CD4-positive, alpha-beta memory T cell (primary cell): ENCODE measurements at regions of chr15 and their contacts with region 1.

Region 1: DNA sequence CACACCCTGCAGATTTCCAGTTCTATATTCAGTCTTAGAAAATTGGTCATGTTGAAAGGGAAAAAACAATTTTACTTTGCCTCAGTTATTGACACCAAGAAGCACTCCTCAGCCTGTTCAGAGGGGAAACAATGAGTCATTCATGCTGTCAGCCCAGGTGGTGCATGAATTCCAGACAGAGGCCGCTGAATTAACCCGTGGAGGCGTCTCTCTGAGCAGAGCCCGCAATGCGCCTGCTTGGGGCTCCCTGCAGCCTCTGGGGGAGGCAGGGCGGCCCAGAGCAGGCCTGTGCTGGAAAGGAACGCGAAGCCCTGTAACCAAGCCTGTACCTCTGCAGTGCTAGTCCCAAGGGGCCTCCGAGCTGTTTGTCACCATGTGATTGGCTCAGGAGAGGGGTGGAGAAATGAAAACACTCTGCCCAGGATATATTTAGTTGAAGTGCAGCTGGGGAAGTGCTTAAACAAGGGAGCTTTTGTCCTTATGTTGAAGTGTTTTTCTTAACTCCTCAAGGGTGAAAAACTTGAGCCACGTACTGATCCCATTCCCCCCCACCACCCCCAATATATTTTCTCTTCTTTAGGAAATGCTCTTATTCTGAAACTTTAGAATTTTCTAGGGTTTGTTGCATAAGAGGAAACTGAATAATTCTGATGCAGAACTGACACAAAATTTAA is 68.3 kb upstream of the CHD2 start:
- DNase-seq: peak; percentile 80 to 98 (median 89)
- H3K4me3 ChIP-seq: peak overlapping the region; percentile 27 to 34
- H3K4me3 Mint-ChIP-seq: peak overlapping the region; percentile 69 to 91 (median 80)
- H3K27ac ChIP-seq: peak overlapping the region; percentile 66
- H3K27ac Mint-ChIP-seq: peak overlapping the region; percentile 93 to 99 (median 95)
- H3K4me1 ChIP-seq: peaks cover 47% of the 10 kb centered on the region
- H3K4me1 Mint-ChIP-seq: peaks cover 29 to 44% (median 38%) of the 10 kb centered on the region in 4 donors
- H3K27me3 ChIP-seq: no peaks in the 10 kb centered on the region
- H3K27me3 Mint-ChIP-seq: peaks cover 0 to 1% of the 10 kb centered on the region in 2 donors

Region 2: DNA sequence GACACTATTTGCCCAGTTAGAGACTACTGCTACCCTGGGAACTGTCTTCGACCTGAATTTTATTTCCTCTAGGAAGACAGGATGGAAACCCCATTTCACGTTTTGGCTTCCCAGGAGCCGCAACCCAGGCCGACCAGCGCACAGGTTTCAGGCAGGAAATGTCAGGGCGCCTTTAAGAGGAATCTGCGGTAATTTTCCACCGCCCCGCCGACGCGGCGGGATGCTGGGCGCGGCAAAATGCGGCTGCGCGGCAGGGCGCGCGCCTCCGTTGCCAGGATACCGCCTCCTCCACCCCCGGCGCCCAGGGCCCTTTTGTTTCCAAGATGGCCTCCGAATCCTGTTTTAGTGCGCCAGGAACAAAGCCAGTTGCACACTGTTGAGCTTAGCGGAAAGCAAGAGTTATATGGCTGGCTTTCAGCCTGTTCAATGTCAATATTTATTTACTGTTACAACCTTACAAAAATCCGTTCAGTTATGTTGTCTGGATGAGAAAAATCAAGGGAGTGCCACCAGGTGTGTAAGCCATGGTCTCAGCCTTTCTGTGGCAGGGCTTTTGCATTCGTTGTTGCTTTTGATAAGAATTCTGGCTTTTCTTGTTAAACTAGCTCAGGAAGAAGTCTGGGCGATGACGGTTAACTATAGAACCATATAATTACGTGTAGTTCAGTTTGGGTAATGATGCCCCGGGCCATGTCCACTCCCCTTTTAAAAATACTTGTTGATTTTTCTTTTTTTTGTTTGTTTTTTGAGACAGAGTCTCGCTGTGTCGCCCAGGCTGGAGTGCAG is 11.4 kb before region 1 on chr15:
- CTCF ChIA-PET with region 1: interaction called, 57 read pairs
- POLR2A ChIA-PET with region 1: interaction called, 245 read pairs
- intact Hi-C with region 1: loop called (anchors 1 kb)
- DNase-seq: peak; percentile 87 to 89 (median 88)
- H3K4me3 ChIP-seq: peak overlapping the region; percentile 79 to 86
- H3K4me3 Mint-ChIP-seq: peak overlapping the region; percentile 74 to 93 (median 91)
- H3K27ac ChIP-seq: peak overlapping the region; percentile 74
- H3K27ac Mint-ChIP-seq: peak overlapping the region; percentile 97 to 99 (median 99)
- H3K4me1 ChIP-seq: peaks cover 67% of the 10 kb centered on the region
- H3K4me1 Mint-ChIP-seq: peaks cover 40 to 65% (median 54%) of the 10 kb centered on the region in 4 donors
- H3K27me3 ChIP-seq: no peaks in the 10 kb centered on the region
- H3K27me3 Mint-ChIP-seq: no peaks in the 10 kb centered on the region

Region 3: GRCh38 chr15:92845126-92845508 is 13.3 kb after region 1 on chr15:
- CTCF ChIA-PET with region 1: interaction called, 11 read pairs
- POLR2A ChIA-PET with region 1: interaction called, 138 read pairs
- intact Hi-C with region 1: loop called (anchors 1 kb)
- DNase-seq: peak in 4 of 5 donors; percentile 57 to 71 (median 66)
- H3K4me3 ChIP-seq: peak overlapping the region; percentile 21 to 25
- H3K4me3 Mint-ChIP-seq: peak overlapping the region; percentile 73 to 94 (median 86)
- H3K27ac ChIP-seq: peak overlapping the region; percentile 44
- H3K27ac Mint-ChIP-seq: peak overlapping the region; percentile 73 to 99 (median 98)
- H3K4me1 ChIP-seq: peaks cover 80% of the 10 kb centered on the region
- H3K4me1 Mint-ChIP-seq: peaks cover 36 to 86% (median 67%) of the 10 kb centered on the region in 4 donors
- H3K27me3 ChIP-seq: no peaks in the 10 kb centered on the region
- H3K27me3 Mint-ChIP-seq: no peaks in the 10 kb centered on the region

Region 4: GRCh38 chr15:92896561-92896960 is 64.8 kb after region 1 on chr15:
- CTCF ChIA-PET with region 1: interaction called, 8 read pairs
- POLR2A ChIA-PET with region 1: interaction called, 122 read pairs
- intact Hi-C with region 1: no loop called
- DNase-seq: no peak
- H3K4me3 ChIP-seq: no peak overlapping the region
- H3K4me3 Mint-ChIP-seq: peak overlapping the region in 7 of 8 donors; percentile 22 to 79 (median 46)
- H3K27ac ChIP-seq: peak overlapping the region; percentile 55
- H3K27ac Mint-ChIP-seq: peak overlapping the region; percentile 73 to 98 (median 77)
- H3K4me1 ChIP-seq: peaks cover 84% of the 10 kb centered on the region
- H3K4me1 Mint-ChIP-seq: peaks cover 47 to 84% (median 64%) of the 10 kb centered on the region in 4 donors
- H3K27me3 ChIP-seq: no peaks in the 10 kb centered on the region
- H3K27me3 Mint-ChIP-seq: no peaks in the 10 kb centered on the region